ENCODE measurements at regions of chr2 and their contacts with region 1.

Region 1: GRCh38 chr2:127415593-127416505 is 2.4 kb upstream of the PROC start:
- DNase-seq: peak; percentile 85
- H3K4me3 Mint-ChIP-seq: peak overlapping the region; percentile 64
- H3K27ac Mint-ChIP-seq: peak overlapping the region; percentile 81
- H3K4me1 Mint-ChIP-seq: peaks cover 34% of the 10 kb centered on the region
- H3K27me3 Mint-ChIP-seq: peaks cover 57% of the 10 kb centered on the region

Region 2: DNA sequence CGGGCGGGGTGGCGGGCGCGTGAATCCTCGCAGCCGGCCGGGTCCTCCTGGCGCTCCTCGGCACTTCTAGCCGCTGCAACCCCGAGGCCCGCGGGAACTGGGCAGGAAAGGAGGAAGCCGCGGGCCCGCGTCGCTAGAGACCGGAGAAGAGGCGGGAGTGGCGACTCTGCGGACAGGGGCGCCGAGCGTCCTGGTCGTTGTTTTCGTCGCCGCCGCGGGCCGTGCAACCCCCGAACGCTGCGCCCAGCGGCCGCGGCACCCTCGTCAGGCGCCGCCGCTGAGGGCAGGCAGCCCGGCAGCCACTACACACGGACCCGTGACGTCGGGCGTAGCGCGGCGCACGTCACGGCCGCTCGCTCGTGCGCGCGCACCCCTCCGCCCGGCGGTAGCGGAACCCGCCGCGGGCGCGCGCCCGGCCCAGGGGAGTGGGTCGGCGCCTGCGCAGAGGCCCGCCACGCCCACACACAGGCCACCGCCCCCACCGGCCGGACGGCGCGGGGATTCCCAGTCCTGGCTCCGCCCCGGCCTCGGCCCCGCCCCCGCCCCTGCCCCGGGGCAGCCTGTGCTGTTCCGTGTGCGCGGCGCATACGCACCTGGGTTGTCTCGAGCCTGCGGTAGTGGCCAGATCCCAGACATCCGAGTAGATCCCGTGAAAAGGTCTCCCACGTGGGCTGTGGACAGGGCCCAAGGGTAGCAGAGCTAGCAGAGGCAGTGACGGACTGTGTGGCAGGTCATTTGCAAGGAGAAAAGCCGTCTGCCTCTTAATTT is 28.0 kb before region 1 on chr2 and contains the start of gene MAP3K2:
- CTCF ChIA-PET with region 1: interaction called, 16 read pairs
- DNase-seq: peak; percentile 94
- H3K4me3 Mint-ChIP-seq: peak within 1 kb of the TSS; percentile 93
- H3K27ac Mint-ChIP-seq: peak within 1 kb of the TSS; percentile 93
- H3K4me1 Mint-ChIP-seq: peaks cover 58% of the 10 kb centered on the region
- H3K27me3 Mint-ChIP-seq: no peaks in the 10 kb centered on the region

Measured in activated naive CD4-positive, alpha-beta T cell treated with anti-CD3 and anti-CD28 coated beads, Interleukin-2, amount 10 ng/mL, durations not matched to agents 7 days and 5 days (primary cell).